ENCODE measurements at regions of chr6 and their contacts with region 1.

Region 1: DNA sequence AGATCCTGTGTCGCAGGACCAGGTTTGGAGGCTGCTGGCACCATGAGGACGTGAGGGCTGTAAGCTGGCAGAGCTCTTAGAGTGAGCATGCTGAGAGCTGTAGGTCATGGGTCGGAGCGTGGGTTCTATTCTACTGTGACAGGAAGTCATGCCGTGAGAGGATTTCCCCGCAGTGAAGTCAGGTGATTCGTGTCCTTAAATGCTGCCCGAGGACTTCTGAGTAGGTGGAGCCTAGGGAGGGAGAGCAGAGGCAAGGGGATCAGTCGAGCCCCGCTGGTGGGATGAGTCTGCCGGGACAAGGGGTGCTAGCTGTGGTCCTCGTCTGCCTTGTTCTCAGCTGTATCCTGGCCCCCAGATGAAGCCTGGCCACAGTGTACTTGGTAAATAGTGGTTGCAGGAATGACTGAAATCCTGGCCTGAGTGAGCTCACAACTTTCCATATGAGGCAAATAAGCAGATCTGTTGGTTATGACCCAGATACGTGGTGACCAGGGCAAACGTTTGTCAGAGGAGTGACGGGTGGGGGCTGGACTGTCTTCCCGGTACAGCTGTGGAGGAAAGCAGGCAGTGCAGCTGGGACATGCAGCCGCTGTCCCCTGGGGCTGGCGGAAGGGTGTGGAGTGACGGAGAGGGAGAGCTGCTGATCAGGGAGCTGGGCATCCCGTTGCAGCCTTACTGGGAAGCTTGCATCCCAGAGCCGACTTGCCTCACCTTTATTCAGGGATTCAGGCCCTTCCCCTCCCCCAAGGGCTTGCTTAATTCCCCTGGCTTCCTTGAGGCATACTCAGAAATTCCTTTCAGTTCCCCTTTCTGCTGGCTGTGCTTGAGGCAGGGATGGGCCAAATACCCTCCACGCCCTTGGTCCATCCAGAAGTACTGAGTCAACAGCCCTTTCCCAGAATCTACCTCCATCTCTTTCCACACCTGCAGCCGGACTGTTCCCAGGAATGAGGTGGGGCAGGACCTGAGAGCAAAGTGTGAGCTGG is 250.9 kb upstream of the RREB1 start:
- DNase-seq: peak; percentile 99
- H3K4me3 Mint-ChIP-seq: peak overlapping the region; percentile 61
- H3K27ac Mint-ChIP-seq: peak overlapping the region; percentile 90
- H3K4me1 Mint-ChIP-seq: peaks cover 31% of the 10 kb centered on the region
- H3K27me3 Mint-ChIP-seq: no peaks in the 10 kb centered on the region
- CTCF ChIP-seq: no peak

Region 2: DNA sequence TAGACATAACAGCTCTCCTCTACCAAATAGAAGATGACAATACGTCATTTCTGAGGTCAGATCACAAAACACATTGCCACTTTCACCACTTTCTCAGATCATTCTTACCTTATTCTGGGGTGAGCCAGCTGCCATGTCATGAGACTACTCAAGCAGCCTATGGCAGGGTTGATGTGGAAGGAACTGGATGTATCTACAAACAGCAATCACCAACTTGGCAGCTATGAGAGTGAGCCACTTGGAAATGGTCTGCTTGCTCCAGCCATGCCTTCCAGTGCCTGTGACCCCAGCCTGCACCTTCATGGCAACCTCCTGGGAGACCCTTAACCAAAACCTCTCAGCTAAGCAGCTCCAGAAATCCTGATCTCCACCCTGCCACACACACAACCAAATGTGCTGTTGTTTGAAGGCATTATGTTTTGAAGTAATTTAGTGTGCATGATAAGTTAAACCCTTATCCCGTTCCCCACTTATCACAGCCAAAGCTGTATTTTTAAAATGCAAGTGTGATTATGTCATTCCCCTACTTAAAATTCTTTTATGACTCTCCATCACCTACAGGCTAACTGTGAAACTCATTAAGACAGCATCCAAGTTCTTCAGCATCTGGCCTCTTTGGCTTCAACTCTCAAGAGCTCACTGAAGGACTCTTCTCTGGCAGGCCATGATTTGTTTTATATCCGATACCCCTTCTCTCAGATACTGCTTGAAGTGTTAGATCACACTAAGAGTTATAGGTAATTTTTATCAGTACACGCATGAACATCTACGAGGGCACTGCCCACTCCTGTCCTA is 117.7 kb before region 1 on chr6:
- CTCF ChIA-PET with region 1: no interaction called
- POLR2A ChIA-PET with region 1: no interaction called
- intact Hi-C with region 1: no loop called
- DNase-seq: no peak
- H3K4me3 Mint-ChIP-seq: no peak overlapping the region
- H3K27ac Mint-ChIP-seq: no peak overlapping the region
- H3K4me1 Mint-ChIP-seq: peaks cover 9% of the 10 kb centered on the region
- H3K27me3 Mint-ChIP-seq: no peaks in the 10 kb centered on the region
- CTCF ChIP-seq: no peak

Region 3: DNA sequence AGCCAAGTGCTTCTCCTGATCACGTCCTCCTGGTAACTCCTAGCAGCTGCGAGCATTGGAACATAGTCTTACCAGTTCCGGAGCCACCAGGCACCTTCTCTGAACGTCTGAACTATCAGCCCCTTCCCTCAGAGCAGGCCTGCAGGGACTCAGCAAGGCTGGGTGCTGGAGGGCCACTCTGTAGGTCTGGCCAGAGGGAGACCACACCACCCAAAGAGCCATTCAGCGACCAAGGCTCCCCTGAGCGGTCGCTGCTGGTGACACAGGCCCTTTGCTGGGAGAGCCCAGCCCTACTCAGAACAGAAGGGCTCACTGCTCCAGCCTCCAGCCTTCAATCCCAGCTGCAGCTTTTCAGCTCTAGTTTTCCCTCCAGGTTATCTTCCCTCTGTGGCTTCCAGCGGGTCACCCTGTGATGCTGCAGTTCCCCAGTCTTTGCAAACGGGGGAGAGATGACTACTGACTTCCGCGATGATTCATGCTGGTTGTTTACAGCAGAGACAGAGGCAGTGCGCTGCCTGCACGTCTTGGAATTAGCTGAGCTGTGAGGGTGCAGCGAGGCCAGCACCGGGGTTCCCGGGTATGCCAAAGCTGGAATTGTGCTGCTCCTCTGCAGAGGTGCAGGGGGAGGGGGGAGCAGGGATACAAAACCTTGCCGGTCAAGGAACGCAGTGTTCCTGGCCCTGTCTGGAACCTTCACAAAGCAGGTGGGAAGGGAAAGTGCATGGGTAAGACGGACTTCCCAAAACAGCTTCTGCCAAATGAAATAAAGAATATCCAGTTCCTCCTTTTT is 106.9 kb before region 1 on chr6:
- CTCF ChIA-PET with region 1: no interaction called
- POLR2A ChIA-PET with region 1: interaction called, 17 read pairs
- intact Hi-C with region 1: no loop called
- DNase-seq: peak; percentile 92
- H3K4me3 Mint-ChIP-seq: peak overlapping the region; percentile 35
- H3K27ac Mint-ChIP-seq: peak overlapping the region; percentile 54
- H3K4me1 Mint-ChIP-seq: peaks cover 34% of the 10 kb centered on the region
- H3K27me3 Mint-ChIP-seq: no peaks in the 10 kb centered on the region
- CTCF ChIP-seq: no peak

Region 4: DNA sequence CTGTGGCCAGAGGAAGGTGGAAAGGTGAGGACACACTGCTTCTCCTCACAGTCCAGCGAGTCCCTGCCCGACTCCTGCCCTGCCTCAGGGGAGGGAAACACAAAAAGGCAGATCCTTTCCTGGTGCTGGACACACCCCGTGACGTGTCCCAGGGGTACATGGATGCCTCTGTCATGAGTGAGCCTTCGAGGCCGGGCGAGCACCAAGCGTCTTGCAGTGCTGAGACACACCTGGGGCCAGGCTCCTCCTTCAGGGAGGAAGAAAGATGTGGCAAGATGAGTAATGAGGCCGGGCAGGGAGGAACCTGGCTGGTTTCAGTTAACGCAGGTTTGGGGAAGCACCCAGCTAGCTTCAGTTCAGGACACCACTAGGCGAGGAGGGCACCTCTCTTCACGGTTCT is 53.3 kb before region 1 on chr6:
- CTCF ChIA-PET with region 1: interaction called, 3 read pairs
- POLR2A ChIA-PET with region 1: interaction called, 16 read pairs
- intact Hi-C with region 1: no loop called
- DNase-seq: peak; percentile 98
- H3K4me3 Mint-ChIP-seq: peak overlapping the region; percentile 27
- H3K27ac Mint-ChIP-seq: peak overlapping the region; percentile 84
- H3K4me1 Mint-ChIP-seq: peaks cover 39% of the 10 kb centered on the region
- H3K27me3 Mint-ChIP-seq: no peaks in the 10 kb centered on the region
- CTCF ChIP-seq: no peak

Region 5: DNA sequence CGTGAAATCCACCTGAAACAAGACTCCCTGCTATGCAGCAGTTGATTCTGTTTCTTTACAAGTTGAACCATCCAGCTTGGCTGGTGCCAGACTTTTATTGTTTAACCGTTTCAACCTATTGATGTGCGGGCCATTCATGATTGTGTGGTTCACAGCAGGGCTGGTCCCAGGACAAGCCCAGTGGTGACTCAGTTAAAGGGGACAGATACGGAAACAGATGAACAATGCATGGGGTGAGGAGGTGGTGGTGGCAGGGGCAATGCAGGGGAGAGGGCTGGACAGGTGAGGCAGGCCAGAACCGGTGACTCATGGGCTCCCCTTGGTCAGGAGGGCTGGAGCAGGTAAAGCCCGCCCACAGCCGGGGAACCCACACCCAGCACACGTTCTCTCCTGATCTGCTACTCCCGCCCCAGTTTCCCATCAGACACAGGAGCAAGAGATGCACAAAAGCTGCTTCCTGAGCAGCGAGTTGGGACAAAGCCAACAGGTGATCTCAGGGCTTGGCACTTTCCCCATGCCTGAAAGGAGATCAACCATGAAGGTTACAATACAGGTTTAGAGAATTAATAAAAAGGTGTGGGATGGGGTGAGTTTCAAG is 36.1 kb before region 1 on chr6:
- CTCF ChIA-PET with region 1: interaction called, 4 read pairs
- POLR2A ChIA-PET with region 1: interaction called, 24 read pairs
- intact Hi-C with region 1: no loop called
- DNase-seq: peak; percentile 94
- H3K4me3 Mint-ChIP-seq: no peak overlapping the region
- H3K27ac Mint-ChIP-seq: no peak overlapping the region
- H3K4me1 Mint-ChIP-seq: peaks cover 39% of the 10 kb centered on the region
- H3K27me3 Mint-ChIP-seq: no peaks in the 10 kb centered on the region
- CTCF ChIP-seq: no peak

Region 6: DNA sequence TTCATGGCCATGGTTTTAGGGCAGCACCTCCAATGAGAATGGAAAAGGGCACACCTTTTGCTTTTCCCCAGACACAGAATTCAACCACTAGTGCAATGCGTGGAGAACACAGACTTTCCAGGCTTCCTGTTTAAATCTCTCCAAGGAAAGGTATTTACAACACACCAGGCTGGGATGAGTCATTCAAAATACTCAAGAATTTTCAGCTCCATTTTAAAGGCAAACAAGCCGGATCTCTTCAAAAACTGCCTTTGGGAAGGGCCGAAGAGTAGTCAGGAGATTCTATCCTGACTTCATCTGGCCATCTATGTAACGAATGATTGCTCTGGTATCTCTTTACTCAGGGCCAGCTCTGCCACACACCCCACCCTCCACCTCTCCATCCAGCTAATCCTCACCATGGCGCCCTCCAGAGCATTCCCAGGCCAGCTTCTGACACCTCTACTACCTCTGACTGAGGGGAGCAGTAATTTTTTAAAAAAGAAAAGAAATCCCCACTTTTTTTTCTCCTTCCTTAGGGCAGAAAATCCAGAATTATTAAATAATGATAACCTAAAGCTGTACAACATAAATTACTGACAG is 13.7 kb before region 1 on chr6:
- CTCF ChIA-PET with region 1: no interaction called
- POLR2A ChIA-PET with region 1: interaction called, 9 read pairs
- intact Hi-C with region 1: loop called (anchors 2 kb)
- DNase-seq: peak; percentile 53
- H3K4me3 Mint-ChIP-seq: no peak overlapping the region
- H3K27ac Mint-ChIP-seq: peak overlapping the region; percentile 61
- H3K4me1 Mint-ChIP-seq: peaks cover 33% of the 10 kb centered on the region
- H3K27me3 Mint-ChIP-seq: no peaks in the 10 kb centered on the region
- CTCF ChIP-seq: no peak

Region 7: GRCh38 chr6:6905961-6906518 is 49.2 kb after region 1 on chr6:
- CTCF ChIA-PET with region 1: no interaction called
- POLR2A ChIA-PET with region 1: interaction called, 15 read pairs
- intact Hi-C with region 1: no loop called
- DNase-seq: no peak
- H3K4me3 Mint-ChIP-seq: no peak overlapping the region
- H3K27ac Mint-ChIP-seq: no peak overlapping the region
- H3K4me1 Mint-ChIP-seq: peaks cover 15% of the 10 kb centered on the region
- H3K27me3 Mint-ChIP-seq: no peaks in the 10 kb centered on the region
- CTCF ChIP-seq: no peak

Region 8: DNA sequence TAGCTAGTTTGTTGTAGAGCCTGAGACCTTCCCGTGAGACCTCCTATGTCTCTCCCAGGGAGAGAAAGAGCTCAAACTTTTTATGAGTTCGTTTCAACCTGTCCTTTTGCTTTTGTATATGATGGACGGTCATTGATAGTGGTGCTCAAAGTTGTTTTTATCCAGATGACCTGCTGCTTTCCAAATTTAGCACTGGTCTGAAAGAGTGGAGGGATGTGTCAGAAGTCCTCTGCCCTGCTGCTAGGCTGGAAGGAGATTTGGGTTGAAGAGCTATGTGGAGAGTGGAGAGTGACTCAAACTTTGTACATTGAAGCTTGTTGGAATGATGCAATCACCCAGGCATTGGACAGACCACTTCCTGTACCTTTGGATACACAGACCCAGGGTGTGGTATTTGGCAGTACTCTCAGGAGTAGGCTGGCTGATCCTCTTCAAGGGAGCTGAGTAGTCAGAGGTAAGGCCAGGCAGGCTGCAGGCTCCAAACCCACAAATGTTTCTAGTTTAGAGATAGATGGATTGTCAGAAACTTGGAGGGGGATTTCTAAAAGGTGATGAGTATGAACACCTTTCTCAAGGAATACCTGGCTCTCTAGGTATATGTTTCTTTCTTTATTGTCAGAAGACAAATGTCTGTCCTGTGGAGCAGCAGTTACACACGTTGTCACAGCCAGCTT is 201.6 kb after region 1 on chr6:
- CTCF ChIA-PET with region 1: no interaction called
- POLR2A ChIA-PET with region 1: interaction called, 18 read pairs
- intact Hi-C with region 1: no loop called
- DNase-seq: peak; percentile 99
- H3K4me3 Mint-ChIP-seq: peak overlapping the region; percentile 44
- H3K27ac Mint-ChIP-seq: peak overlapping the region; percentile 91
- H3K4me1 Mint-ChIP-seq: peaks cover 30% of the 10 kb centered on the region
- H3K27me3 Mint-ChIP-seq: no peaks in the 10 kb centered on the region
- CTCF ChIP-seq: no peak

Measured in MCF 10A (cell line).